GM12878 (cell line): ENCODE measurements at regions of chr3 and their contacts with region 1.

Region 1: DNA sequence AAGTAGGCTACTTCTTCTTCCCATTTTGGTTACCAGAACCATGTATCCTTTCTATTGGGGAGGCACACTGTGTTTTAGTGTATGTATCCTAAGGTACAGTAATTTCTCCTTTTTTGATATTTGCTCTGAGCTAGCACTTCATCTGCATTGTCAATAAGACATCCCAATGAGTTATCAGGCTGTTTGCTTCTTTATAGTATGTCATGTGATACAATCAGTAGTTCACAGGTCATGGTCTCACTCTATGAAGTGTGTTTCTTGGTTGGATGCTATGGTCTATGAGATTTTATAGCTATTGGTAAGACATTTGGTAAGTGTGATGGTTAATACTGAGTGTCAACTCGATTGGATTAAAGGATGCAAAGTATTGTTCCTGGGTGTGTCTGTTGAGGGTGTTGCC is 712.5 kb upstream of the BCHE start:
- DNase-seq: no peak
- ATAC-seq: no peak
- H3K4me3 ChIP-seq: no peak overlapping the region
- H3K27ac ChIP-seq: no peak overlapping the region
- H3K4me1 ChIP-seq: no peaks in the 10 kb centered on the region
- H3K27me3 ChIP-seq: no peaks in the 10 kb centered on the region
- CTCF ChIP-seq: no peak
- EP300 ChIP-seq: no peak
- POLR2A ChIP-seq: no peak
- RAD21 ChIP-seq: no peak

Region 2: DNA sequence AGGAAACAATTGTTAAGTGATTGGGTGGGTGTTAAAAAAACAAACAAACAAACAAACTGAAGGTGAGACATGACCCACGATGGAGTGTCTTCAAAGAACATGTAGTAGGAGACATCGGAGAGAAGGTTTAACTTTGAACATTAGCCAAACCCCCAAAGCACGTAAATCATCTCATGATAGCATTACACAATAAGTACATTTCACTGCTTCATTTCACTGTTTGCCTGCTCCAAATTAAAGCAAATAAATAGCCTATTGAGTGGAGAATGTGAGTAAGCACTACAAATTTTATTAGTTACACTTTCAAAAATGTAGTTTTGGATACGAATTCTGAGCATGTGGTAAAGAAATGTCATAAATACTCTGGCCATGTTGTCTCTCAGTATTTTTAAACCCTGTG is 1758.5 kb before region 1 on chr3:
- CTCF ChIA-PET with region 1: no interaction called
- POLR2A ChIA-PET with region 1: interaction called, 10 read pairs
- RAD21 ChIA-PET with region 1: no interaction called
- SMC1A ChIA-PET with region 1: no interaction called
- in situ Hi-C with region 1: no loop called
- intact Hi-C with region 1: no loop called
- DNase-seq: no peak
- ATAC-seq: no peak
- H3K4me3 ChIP-seq: no peak overlapping the region
- H3K27ac ChIP-seq: no peak overlapping the region
- H3K4me1 ChIP-seq: no peaks in the 10 kb centered on the region
- H3K27me3 ChIP-seq: no peaks in the 10 kb centered on the region
- CTCF ChIP-seq: no peak
- EP300 ChIP-seq: no peak
- POLR2A ChIP-seq: no peak
- RAD21 ChIP-seq: no peak